MCF 10A (cell line): ENCODE measurements at regions of chr15 and their contacts with region 1.

Region 1: GRCh38 chr15:40344631-40345120 is 3.9 kb upstream of the CCDC9B start:
- DNase-seq: peak; percentile 73
- H3K4me3 Mint-ChIP-seq: no peak overlapping the region
- H3K27ac Mint-ChIP-seq: no peak overlapping the region
- H3K4me1 Mint-ChIP-seq: peaks cover 40% of the 10 kb centered on the region
- H3K27me3 Mint-ChIP-seq: no peaks in the 10 kb centered on the region
- CTCF ChIP-seq: peak; percentile 83

Region 2: DNA sequence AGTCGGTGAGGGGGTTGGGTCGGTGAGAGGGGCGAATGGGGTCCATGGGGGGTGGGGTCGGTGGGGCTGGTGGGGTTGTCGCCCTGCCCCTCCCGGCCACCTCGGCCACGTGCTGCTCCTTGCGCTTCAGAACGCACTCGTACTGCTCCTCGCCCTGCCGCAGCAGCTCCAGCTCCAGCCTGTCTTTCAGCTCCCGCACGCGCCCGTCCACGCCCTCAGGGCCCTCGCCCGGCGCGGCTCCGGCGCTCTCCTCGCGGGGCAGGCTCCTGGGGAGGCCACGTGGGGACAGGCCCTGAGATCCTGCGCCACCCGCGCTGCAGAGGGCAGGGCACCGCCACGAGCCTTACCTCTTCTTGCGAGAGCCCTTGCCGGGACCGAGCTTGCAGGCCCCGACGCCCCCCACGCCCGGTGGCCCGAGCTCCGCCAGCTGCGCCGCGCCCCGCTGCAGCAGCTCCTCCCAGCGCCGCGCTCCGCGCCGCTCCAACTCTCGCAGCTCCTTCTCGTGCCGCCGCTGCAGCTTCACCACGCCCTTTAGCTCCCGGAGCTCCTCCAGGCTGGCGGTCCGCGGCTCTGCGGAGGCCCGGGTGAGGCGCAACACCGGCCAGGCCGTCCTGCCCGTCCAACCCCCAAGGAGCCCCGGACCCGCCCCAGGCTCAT is 53.6 kb before region 1 on chr15:
- CTCF ChIA-PET with region 1: interaction called, 62 read pairs
- POLR2A ChIA-PET with region 1: interaction called, 3 read pairs
- intact Hi-C with region 1: no loop called
- DNase-seq: peak; percentile 63
- H3K4me3 Mint-ChIP-seq: peak overlapping the region; percentile 62
- H3K27ac Mint-ChIP-seq: no peak overlapping the region
- H3K4me1 Mint-ChIP-seq: peaks cover 4% of the 10 kb centered on the region
- H3K27me3 Mint-ChIP-seq: peaks cover 10% of the 10 kb centered on the region
- CTCF ChIP-seq: no peak

Region 3: DNA sequence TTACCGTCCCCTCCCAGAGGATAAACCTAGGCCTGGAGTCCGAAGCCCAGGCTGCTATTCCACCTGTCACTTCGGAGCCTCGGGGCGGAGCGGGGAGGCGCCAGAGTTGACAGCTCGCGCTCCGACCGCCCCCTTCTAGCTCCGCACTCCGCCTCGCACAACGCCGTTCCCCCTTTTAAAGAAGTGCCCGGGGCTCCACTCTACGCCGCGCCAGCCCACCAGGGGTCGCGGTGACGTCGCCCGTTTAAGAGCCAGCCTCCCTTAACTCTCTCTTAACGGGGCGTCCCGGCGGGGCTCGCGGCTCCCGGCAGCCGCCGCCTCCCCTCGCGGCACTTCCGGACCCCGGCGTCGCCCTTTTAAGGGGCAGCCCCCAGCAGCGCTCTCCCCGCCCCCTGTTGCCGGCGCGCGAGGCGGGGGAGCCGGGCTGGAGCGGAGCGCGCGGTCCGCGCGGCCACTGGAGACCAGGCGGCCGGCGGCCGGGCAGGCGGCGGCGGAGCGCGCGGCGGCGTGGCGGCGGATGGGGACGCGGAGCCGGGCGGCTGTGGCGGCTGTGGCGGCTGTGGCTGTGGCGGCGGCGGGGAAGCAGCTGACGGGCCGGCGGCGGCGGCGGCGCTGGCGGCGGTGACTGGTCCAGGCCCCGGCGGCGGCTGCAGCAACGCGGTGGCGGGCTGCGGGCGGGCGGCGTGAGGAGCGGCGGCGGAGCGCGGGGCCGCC is 21.3 kb before region 1 on chr15 and contains the start of gene INAFM2:
- CTCF ChIA-PET with region 1: interaction called, 123 read pairs
- POLR2A ChIA-PET with region 1: interaction called, 62 read pairs
- intact Hi-C with region 1: no loop called
- DNase-seq: peak; percentile 89
- H3K4me3 Mint-ChIP-seq: peak within 1 kb of the TSS; percentile 69
- H3K27ac Mint-ChIP-seq: no peak within 1 kb of the TSS
- H3K4me1 Mint-ChIP-seq: peaks cover 30% of the 10 kb centered on the region
- H3K27me3 Mint-ChIP-seq: no peaks in the 10 kb centered on the region
- CTCF ChIP-seq: peak; percentile 32
- total RNA-seq, gene INAFM2: 14.9 and 15.7 TPM in 2 replicates

Region 4: DNA sequence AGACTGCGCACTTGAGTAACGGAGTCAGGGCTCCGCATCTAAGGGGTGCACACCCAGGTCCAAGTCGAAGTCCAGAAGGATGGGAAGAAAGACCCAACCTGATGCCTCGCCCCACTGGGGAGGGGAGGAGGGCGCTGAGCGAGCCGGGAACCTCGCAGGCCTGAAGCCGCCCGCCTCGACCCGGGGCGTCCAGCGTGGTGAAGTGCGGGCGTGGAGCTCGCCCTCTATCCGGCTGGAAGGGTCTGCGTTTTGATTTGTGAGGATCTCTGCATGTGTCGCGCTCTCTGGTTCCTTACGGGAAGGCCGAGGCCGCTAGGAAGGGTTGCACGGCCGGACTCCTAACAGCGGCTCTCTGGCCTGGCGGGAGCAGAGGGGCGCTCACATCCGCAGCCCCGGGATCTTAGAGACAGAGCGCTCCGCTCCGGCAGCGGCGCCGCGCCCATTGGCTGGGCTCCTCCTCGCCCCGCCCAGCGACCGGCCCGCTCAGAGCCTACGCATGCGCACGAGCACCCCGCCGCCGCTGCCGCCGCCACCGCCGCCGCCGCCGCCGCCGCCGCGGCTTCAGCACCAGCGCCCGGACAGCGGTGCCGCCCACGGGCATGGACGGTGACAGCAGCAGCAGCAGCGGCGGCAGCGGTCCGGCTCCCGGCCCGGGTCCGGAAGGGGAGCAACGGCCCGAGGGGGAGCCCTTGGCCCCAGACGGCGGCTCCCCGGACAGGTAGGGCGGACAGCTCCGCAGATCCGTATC is 13.2 kb after region 1 on chr15 and contains the start of gene DISP2:
- CTCF ChIA-PET with region 1: interaction called, 112 read pairs
- POLR2A ChIA-PET with region 1: interaction called, 5 read pairs
- intact Hi-C with region 1: no loop called
- DNase-seq: peak; percentile 71
- H3K4me3 Mint-ChIP-seq: peak within 1 kb of the TSS; percentile 73
- H3K27ac Mint-ChIP-seq: no peak within 1 kb of the TSS
- H3K4me1 Mint-ChIP-seq: no peaks in the 10 kb centered on the region
- H3K27me3 Mint-ChIP-seq: no peaks in the 10 kb centered on the region
- CTCF ChIP-seq: no peak
- total RNA-seq, gene DISP2: 1.8 and 2.1 TPM in 2 replicates

Region 5: GRCh38 chr15:40372981-40373380 is 28.3 kb after region 1 on chr15:
- CTCF ChIA-PET with region 1: interaction called, 112 read pairs
- POLR2A ChIA-PET with region 1: interaction called, 4 read pairs
- intact Hi-C with region 1: loop called (anchors 1 kb)
- DNase-seq: no peak
- H3K4me3 Mint-ChIP-seq: no peak overlapping the region
- H3K27ac Mint-ChIP-seq: no peak overlapping the region
- H3K4me1 Mint-ChIP-seq: no peaks in the 10 kb centered on the region
- H3K27me3 Mint-ChIP-seq: no peaks in the 10 kb centered on the region
- CTCF ChIP-seq: no peak

Region 6: DNA sequence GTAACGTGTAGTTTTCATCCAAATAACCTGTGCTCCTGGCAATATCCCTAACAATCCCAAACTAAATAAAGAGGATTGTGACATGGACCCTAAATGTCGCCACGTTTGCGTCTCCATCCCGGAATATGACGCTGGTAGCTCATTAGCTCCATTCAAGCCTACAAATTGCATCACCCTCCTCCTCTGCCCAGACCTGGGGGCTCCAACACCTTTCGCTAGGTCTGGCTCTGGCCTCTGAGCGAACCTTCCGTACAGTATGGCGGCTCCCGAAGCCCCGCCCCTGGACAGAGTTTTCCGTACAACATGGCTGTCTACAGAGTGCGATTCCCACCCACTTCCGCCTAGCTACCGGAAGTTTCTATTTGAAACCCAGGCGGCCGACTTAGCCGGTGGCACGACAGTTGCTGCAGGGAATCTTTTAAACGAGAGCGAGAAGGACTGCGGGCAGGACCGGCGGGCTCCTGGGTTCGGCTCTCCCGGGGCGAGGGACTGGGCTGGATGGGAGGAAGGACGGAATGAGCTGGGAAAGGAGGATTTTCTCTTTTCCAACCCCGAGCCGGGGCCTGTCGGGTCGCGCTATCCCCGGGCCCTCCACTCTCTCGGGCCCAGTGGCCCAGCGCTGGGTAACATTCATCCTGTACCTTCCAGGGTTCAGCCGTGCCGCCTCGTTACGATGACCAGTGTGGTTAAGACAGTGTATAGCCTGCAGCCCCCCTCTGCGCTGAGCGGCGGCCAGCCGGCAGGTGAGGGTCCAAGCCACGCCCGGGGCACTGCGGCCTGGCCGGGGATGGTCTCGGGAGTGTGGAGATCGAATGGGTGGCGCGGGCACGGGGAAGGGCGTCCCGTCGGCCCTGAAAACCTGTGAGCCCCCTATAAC is 38.1 kb after region 1 on chr15 and contains the start of gene KNSTRN:
- CTCF ChIA-PET with region 1: interaction called, 11 read pairs
- POLR2A ChIA-PET with region 1: interaction called, 5 read pairs
- intact Hi-C with region 1: no loop called
- DNase-seq: peak; percentile 95
- H3K4me3 Mint-ChIP-seq: peak within 1 kb of the TSS; percentile 97
- H3K27ac Mint-ChIP-seq: peak within 1 kb of the TSS; percentile 89
- H3K4me1 Mint-ChIP-seq: peaks cover 25% of the 10 kb centered on the region
- H3K27me3 Mint-ChIP-seq: no peaks in the 10 kb centered on the region
- CTCF ChIP-seq: no peak
- total RNA-seq, gene KNSTRN: 35.2 and 47.4 TPM in 2 replicates

Region 7: DNA sequence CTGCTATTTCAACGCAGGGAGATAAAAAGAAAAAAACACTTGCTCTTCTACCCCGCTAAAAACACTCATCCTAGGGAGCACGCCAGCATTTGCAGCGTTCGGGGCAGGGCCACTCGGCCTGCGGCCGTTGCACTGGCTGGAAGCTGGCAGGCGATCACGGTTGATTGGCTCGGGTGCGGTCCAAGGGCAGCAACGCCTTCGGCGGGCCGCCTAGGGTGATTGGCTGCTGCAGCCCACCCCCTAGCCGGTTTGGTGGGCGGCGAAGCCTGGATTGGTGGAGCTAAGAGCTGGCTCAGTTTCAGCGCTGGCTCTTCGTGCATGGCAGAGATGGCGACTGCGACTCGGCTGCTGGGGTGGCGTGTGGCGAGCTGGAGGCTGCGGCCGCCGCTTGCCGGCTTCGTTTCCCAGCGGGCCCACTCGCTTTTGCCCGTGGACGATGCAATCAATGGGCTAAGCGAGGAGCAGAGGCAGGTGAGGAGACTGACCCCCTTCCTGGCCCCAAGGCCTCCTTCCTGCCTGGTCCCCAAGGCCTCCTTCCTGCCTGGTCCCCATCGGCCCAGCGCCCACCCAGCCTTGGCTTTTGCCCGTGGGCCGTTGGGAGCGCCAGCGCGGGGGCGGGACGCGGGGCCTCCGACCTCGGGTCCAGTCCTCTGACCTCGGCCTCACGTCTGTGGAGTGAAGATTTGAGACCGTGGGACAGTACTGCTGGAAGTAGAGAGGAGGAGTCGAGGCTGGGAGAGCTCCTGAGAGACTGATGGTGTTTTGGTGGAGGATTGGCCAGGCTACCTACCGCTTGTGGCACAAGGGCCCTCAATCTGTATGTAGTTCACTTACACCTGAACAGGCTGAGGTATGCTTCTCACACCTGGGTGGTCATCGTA is 61.1 kb after region 1 on chr15 and contains the start of gene IVD:
- CTCF ChIA-PET with region 1: interaction called, 8 read pairs
- POLR2A ChIA-PET with region 1: interaction called, 12 read pairs
- intact Hi-C with region 1: no loop called
- DNase-seq: peak; percentile 94
- H3K4me3 Mint-ChIP-seq: peak within 1 kb of the TSS; percentile 83
- H3K27ac Mint-ChIP-seq: peak within 1 kb of the TSS; percentile 64
- H3K4me1 Mint-ChIP-seq: peaks cover 6% of the 10 kb centered on the region
- H3K27me3 Mint-ChIP-seq: no peaks in the 10 kb centered on the region
- CTCF ChIP-seq: no peak
- total RNA-seq, gene IVD: 53.8 and 61.6 TPM in 2 replicates

Region 8: DNA sequence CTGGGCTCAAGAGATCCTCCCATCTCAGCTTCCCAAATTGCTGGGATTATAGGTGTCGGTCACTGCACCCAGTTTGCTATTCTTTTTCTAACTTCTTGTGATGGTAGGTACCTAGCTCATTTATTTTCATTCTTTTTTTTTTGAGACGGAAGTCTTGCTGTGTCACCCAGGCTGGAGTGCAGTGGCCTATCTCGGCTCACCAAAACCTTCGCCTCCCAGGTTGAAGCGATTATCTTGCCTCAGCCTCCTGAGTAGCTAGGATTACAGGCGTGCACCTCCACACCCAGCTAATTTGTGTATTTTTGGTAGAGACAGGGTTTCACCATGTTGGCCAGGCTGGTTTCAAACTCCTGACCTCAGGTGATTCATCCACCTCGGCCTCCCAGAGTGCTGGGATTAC is 320.2 kb after region 1 on chr15:
- CTCF ChIA-PET with region 1: no interaction called
- POLR2A ChIA-PET with region 1: no interaction called
- intact Hi-C with region 1: no loop called
- DNase-seq: no peak
- H3K4me3 Mint-ChIP-seq: no peak overlapping the region
- H3K27ac Mint-ChIP-seq: no peak overlapping the region
- H3K4me1 Mint-ChIP-seq: no peaks in the 10 kb centered on the region
- H3K27me3 Mint-ChIP-seq: no peaks in the 10 kb centered on the region
- CTCF ChIP-seq: no peak